ENCODE measurements at regions of chr16 and their contacts with region 1.

Region 1: GRCh38 chr16:80948886-80949493 is 57.7 kb downstream of the CMC2 start:
- DNase-seq: no peak
- H3K4me3 ChIP-seq: no peak overlapping the region
- CTCF ChIP-seq: peak; percentile 77

Region 2: GRCh38 chr16:80894091-80894490 is 54.9 kb before region 1 on chr16:
- CTCF ChIA-PET with region 1: no interaction called
- POLR2A ChIA-PET with region 1: no interaction called
- DNase-seq: no peak
- H3K4me3 ChIP-seq: no peak overlapping the region
- CTCF ChIP-seq: no peak

Region 3: GRCh38 chr16:80924372-80924978 is 24.5 kb before region 1 on chr16:
- CTCF ChIA-PET with region 1: interaction called, 49 read pairs
- POLR2A ChIA-PET with region 1: interaction called, 3 read pairs
- DNase-seq: no peak
- H3K4me3 ChIP-seq: no peak overlapping the region
- CTCF ChIP-seq: peak; percentile 90

Region 4: GRCh38 chr16:80931801-80932712 is 16.9 kb before region 1 on chr16:
- CTCF ChIA-PET with region 1: interaction called, 33 read pairs
- POLR2A ChIA-PET with region 1: no interaction called
- DNase-seq: no peak
- H3K4me3 ChIP-seq: peak overlapping the region; percentile 59
- CTCF ChIP-seq: peak; percentile 25

Region 5: GRCh38 chr16:80938035-80938865 is 10.7 kb before region 1 on chr16:
- CTCF ChIA-PET with region 1: interaction called, 33 read pairs
- POLR2A ChIA-PET with region 1: no interaction called
- DNase-seq: peak; percentile 99
- H3K4me3 ChIP-seq: peak overlapping the region; percentile 31
- CTCF ChIP-seq: no peak